ENCODE measurements at regions of chr5 and their contacts with region 1.

Region 1: GRCh38 chr5:69093771-69094482 is at the start of gene SLC30A5:
- DNase-seq: peak; percentile 100
- ATAC-seq: peak; percentile 100
- H3K4me3 ChIP-seq: peak within 1 kb of the TSS; percentile 55
- H3K27ac ChIP-seq: peak within 1 kb of the TSS; percentile 64
- H3K4me1 ChIP-seq: peaks cover 3% of the 10 kb centered on the region; the same call in 1 of the 2 replicates
- H3K27me3 ChIP-seq: no peaks in the 10 kb centered on the region
- CTCF ChIP-seq: peak; percentile 95
- POLR2A ChIP-seq: peak; percentile 97
- RAD21 ChIP-seq: peak; percentile 93
- total RNA-seq, gene SLC30A5: 34.8 and 63.3 TPM in 2 replicates

Region 2: DNA sequence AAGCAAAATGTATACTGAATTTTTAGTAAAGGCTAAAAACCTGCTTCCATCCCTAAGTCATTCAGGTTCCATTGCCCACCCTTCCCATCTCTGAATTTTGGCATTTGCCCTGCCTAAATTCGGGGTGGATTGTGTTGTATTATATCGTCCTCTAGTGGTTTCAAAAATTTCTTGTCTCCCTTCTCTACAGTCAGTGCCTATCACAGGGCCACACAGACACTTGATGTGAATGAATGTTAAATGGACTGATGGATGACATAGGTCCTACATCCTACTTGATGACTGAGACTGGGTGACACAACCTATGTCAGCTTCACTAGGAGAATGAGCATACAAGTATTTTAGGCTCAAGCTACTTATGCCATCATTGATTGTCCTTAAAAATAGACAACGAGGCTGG is 45.7 kb before region 1 on chr5:
- CTCF ChIA-PET with region 1: interaction called, 6 read pairs
- POLR2A ChIA-PET with region 1: no interaction called
- dilution Hi-C with region 1: no loop called
- in situ Hi-C with region 1: no loop called
- intact Hi-C with region 1: loop called (anchors 5 kb)
- DNase-seq: no peak
- ATAC-seq: no peak
- H3K4me3 ChIP-seq: no peak overlapping the region
- H3K27ac ChIP-seq: no peak overlapping the region
- H3K4me1 ChIP-seq: no peaks in the 10 kb centered on the region
- H3K27me3 ChIP-seq: no peaks in the 10 kb centered on the region
- CTCF ChIP-seq: peak; percentile 32; the same call in 1 of the 2 replicates
- POLR2A ChIP-seq: no peak
- RAD21 ChIP-seq: peak; percentile 39

Region 3: GRCh38 chr5:69083412-69083811 is 10.5 kb before region 1 on chr5:
- CTCF ChIA-PET with region 1: interaction called, 27 read pairs
- POLR2A ChIA-PET with region 1: no interaction called
- dilution Hi-C with region 1: no loop called
- in situ Hi-C with region 1: no loop called
- intact Hi-C with region 1: no loop called
- DNase-seq: no peak
- ATAC-seq: no peak
- H3K4me3 ChIP-seq: no peak overlapping the region
- H3K27ac ChIP-seq: no peak overlapping the region
- H3K4me1 ChIP-seq: no peaks in the 10 kb centered on the region
- H3K27me3 ChIP-seq: peaks cover 4% of the 10 kb centered on the region
- CTCF ChIP-seq: no peak
- POLR2A ChIP-seq: no peak
- RAD21 ChIP-seq: no peak

Region 4: DNA sequence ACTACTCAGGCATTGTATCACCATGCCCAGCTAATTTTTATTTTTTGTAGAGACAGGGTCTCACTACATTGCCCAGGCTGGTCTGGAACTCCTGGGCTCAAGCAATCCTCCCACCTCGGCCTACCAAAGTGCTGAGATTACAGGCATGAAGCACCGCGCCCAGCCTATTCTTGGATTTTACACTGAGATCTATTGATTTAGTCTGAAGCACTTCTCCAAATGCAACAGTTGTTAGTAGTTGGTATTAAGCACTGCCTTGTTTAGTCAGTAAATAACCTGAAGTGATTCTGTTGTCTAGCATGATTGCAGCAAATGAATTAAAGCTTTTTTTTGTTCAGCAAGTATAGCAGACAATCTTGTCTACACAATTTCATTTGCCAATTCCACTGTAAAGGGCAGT is 64.1 kb after region 1 on chr5:
- CTCF ChIA-PET with region 1: no interaction called
- POLR2A ChIA-PET with region 1: no interaction called
- dilution Hi-C with region 1: no loop called
- in situ Hi-C with region 1: no loop called
- intact Hi-C with region 1: no loop called
- DNase-seq: no peak
- ATAC-seq: no peak
- H3K4me3 ChIP-seq: no peak overlapping the region
- H3K27ac ChIP-seq: no peak overlapping the region
- H3K4me1 ChIP-seq: no peaks in the 10 kb centered on the region
- H3K27me3 ChIP-seq: no peaks in the 10 kb centered on the region
- CTCF ChIP-seq: no peak
- POLR2A ChIP-seq: no peak
- RAD21 ChIP-seq: no peak

Region 5: GRCh38 chr5:69271376-69271775 is 177.4 kb after region 1 on chr5:
- CTCF ChIA-PET with region 1: no interaction called
- POLR2A ChIA-PET with region 1: no interaction called
- dilution Hi-C with region 1: no loop called
- in situ Hi-C with region 1: no loop called
- intact Hi-C with region 1: loop called (anchors 10 kb)
- DNase-seq: peak; percentile 60
- ATAC-seq: peak; percentile 67
- H3K4me3 ChIP-seq: no peak overlapping the region
- H3K27ac ChIP-seq: no peak overlapping the region
- H3K4me1 ChIP-seq: no peaks in the 10 kb centered on the region
- H3K27me3 ChIP-seq: no peaks in the 10 kb centered on the region
- CTCF ChIP-seq: no peak
- POLR2A ChIP-seq: no peak
- RAD21 ChIP-seq: no peak

Region 6: GRCh38 chr5:69343083-69343482 is 249.2 kb after region 1 on chr5:
- CTCF ChIA-PET with region 1: interaction called, 4 read pairs
- POLR2A ChIA-PET with region 1: interaction called, 10 read pairs
- dilution Hi-C with region 1: no loop called
- in situ Hi-C with region 1: no loop called
- intact Hi-C with region 1: no loop called
- DNase-seq: no peak
- ATAC-seq: no peak
- H3K4me3 ChIP-seq: no peak overlapping the region
- H3K27ac ChIP-seq: no peak overlapping the region
- H3K4me1 ChIP-seq: no peaks in the 10 kb centered on the region
- H3K27me3 ChIP-seq: no peaks in the 10 kb centered on the region
- CTCF ChIP-seq: no peak
- POLR2A ChIP-seq: no peak
- RAD21 ChIP-seq: no peak